Pancreas (tissue), 10 donors: ENCODE measurements at regions of chr1 and their contacts with region 1.

Region 1: DNA sequence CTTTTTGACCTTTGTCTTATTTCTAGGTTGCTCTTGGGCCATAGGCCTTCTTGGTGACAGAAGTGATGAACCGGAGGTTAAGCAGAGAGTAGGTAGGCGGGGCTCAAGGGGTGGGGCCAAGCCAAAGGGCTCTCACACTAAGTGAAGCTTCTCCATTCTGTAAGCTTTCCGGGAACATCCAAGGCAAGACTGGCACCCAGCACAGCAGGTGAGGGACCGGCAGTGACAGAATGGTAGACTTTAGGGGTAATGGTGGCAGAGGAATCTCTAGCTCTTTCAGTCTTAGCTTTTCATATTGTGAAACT is at the start of gene TNFAIP8L2:
- DNase-seq: peak in 1 of 6 donors; percentile 43
- ATAC-seq: peak; percentile 12 to 76 (median 56)
- H3K4me3 ChIP-seq: peak within 1 kb of the TSS in 1 of 4 donors; percentile 26
- H3K27ac ChIP-seq: peak within 1 kb of the TSS in 1 of 4 donors; percentile 15
- H3K4me1 ChIP-seq: no peaks in the 10 kb centered on the region
- H3K27me3 ChIP-seq: no peaks in the 10 kb centered on the region
- CTCF ChIP-seq: no peak
- total RNA-seq, gene TNFAIP8L2: 0.16 to 3.8 (median 0.90) TPM

Region 2: GRCh38 chr1:150895601-150896000 is 260.9 kb before region 1 on chr1:
- intact Hi-C with region 1: no loop called
- DNase-seq: no peak
- ATAC-seq: no peak
- H3K4me3 ChIP-seq: no peak overlapping the region
- H3K27ac ChIP-seq: no peak overlapping the region
- H3K4me1 ChIP-seq: no peaks in the 10 kb centered on the region
- H3K27me3 ChIP-seq: no peaks in the 10 kb centered on the region
- CTCF ChIP-seq: no peak

Region 3: DNA sequence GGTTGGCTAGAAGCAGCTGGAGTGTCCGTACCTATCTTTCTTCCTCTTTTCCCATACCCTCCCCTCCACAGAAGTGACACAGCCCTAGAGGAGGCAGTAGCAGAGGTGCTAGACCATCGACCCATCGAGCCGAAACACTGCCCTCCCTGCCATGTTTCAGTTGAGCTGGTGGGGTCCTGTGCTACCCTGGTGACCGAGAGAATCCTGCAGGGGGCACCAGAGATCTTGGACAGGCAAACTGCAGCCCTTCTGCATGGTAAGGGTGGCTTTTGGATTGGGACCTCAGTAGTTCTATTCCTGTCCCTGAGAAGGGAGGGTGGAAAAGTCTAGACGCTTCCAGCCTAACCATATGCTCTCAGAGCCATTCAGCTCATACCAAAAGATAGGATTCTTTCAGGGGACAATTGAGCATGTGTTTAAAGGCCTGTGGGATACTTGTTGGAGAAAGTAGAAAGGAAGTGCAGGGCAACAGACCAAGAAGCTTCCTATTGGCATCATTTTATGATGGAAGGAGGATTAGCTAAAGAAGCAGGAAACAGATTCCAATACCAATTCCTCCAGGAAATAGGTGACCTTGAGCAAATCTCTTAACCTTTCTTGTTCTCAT is 131.8 kb before region 1 on chr1:
- intact Hi-C with region 1: loop called in 1 of 3 experiments (anchors 10 kb)
- DNase-seq: peak; percentile 52 to 84 (median 70)
- ATAC-seq: peak; percentile 84 to 98 (median 92)
- H3K4me3 ChIP-seq: no peak overlapping the region
- H3K27ac ChIP-seq: no peak overlapping the region
- H3K4me1 ChIP-seq: no peaks in the 10 kb centered on the region
- H3K27me3 ChIP-seq: no peaks in the 10 kb centered on the region
- CTCF ChIP-seq: peak; percentile 41 to 59 (median 47)

Region 4: GRCh38 chr1:151098126-151098525 is 58.3 kb before region 1 on chr1:
- intact Hi-C with region 1: loop called in 1 of 3 experiments (anchors 10 kb)
- DNase-seq: no peak
- ATAC-seq: no peak
- H3K4me3 ChIP-seq: no peak overlapping the region
- H3K27ac ChIP-seq: no peak overlapping the region
- H3K4me1 ChIP-seq: no peaks in the 10 kb centered on the region
- H3K27me3 ChIP-seq: no peaks in the 10 kb centered on the region
- CTCF ChIP-seq: no peak

Region 5: GRCh38 chr1:151710187-151710840 is 553.8 kb after region 1 on chr1:
- intact Hi-C with region 1: no loop called
- DNase-seq: peak in 3 of 6 donors; percentile 34 to 58 (median 37)
- ATAC-seq: peak in 2 of 4 donors; percentile 56 to 57
- H3K4me3 ChIP-seq: no peak overlapping the region
- H3K27ac ChIP-seq: no peak overlapping the region
- H3K4me1 ChIP-seq: no peaks in the 10 kb centered on the region
- H3K27me3 ChIP-seq: no peaks in the 10 kb centered on the region
- CTCF ChIP-seq: no peak